Psoas muscle (tissue), 8 donors: ENCODE measurements at regions of chrX and their contacts with region 1.

Region 1: DNA sequence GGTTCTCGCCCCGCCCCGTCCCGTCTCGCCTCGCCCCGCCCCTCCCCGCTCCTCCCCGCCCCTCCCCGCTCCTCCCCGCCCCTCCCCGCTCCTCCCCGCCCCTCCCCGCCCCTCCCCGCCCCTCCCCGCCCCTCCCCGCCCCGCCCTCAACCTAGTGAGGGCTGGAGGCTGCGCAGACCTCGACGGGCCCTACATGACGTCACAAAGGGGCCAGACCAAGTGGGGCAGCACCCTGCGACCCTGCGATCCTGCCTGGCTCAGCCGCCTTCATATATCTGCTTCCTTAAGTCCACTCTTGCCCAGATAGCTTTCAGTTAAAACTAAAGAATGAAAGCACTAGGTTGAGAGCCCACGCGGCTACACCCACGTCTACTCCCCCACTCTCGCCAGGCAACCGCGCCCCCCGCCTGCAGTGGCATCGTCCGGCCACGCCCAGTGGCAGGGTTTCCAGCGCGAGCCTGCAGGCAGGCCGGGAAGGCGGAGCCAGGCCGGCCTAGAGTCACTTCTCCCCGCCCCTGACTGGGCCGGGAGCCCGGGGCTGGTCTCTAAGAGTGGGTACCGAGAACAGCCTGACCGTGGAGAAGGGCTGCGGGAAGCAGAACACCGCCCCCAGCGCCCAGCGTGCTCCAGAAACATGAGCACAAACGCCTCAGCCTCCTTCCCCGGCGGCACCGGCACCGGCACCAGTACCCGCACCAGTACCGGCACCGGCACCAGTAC is 1.5 kb upstream of the MAOA start:
- DNase-seq: peak; percentile 93 to 96
- ATAC-seq: peak; percentile 95 to 98 (median 98)
- H3K4me3 ChIP-seq: peak overlapping the region; percentile 74
- H3K27ac ChIP-seq: peak overlapping the region; percentile 77
- H3K4me1 ChIP-seq: no peaks in the 10 kb centered on the region
- H3K27me3 ChIP-seq: peaks cover 0 to 11% (median 0%) of the 10 kb centered on the region in 3 donors
- CTCF ChIP-seq: peak; percentile 22

Region 2: GRCh38 chrX:42290608-42291007 is 1364.0 kb before region 1 on chrX:
- intact Hi-C with region 1: no loop called
- DNase-seq: no peak
- ATAC-seq: no peak
- H3K4me3 ChIP-seq: no peak overlapping the region
- H3K27ac ChIP-seq: no peak overlapping the region
- H3K4me1 ChIP-seq: no peaks in the 10 kb centered on the region
- H3K27me3 ChIP-seq: no peaks in the 10 kb centered on the region
- CTCF ChIP-seq: no peak

Region 3: GRCh38 chrX:43676971-43677572 is 22.5 kb after region 1 on chrX:
- intact Hi-C with region 1: no loop called
- DNase-seq: no peak
- ATAC-seq: no peak
- H3K4me3 ChIP-seq: no peak overlapping the region
- H3K27ac ChIP-seq: no peak overlapping the region
- H3K4me1 ChIP-seq: no peaks in the 10 kb centered on the region
- H3K27me3 ChIP-seq: no peaks in the 10 kb centered on the region
- CTCF ChIP-seq: no peak

Region 4: GRCh38 chrX:43703211-43703791 is 48.7 kb after region 1 on chrX:
- intact Hi-C with region 1: loop called in 1 of 2 experiments (anchors 10 kb)
- DNase-seq: no peak
- ATAC-seq: peak in 2 of 4 donors; percentile 35 to 40
- H3K4me3 ChIP-seq: no peak overlapping the region
- H3K27ac ChIP-seq: no peak overlapping the region
- H3K4me1 ChIP-seq: no peaks in the 10 kb centered on the region
- H3K27me3 ChIP-seq: peaks cover 0 to 7% (median 0%) of the 10 kb centered on the region in 3 donors
- CTCF ChIP-seq: no peak

Region 5: GRCh38 chrX:43741843-43742573 is 87.4 kb after region 1 on chrX:
- intact Hi-C with region 1: loop called (anchors 5 to 10 kb)
- DNase-seq: no peak
- ATAC-seq: peak in 3 of 4 donors; percentile 77 to 89 (median 88)
- H3K4me3 ChIP-seq: no peak overlapping the region
- H3K27ac ChIP-seq: no peak overlapping the region
- H3K4me1 ChIP-seq: no peaks in the 10 kb centered on the region
- H3K27me3 ChIP-seq: peaks cover 0 to 12% (median 0%) of the 10 kb centered on the region in 3 donors
- CTCF ChIP-seq: no peak